Psoas muscle (tissue), 8 donors: ENCODE measurements at regions of chr17 and their contacts with region 1.

Region 1: GRCh38 chr17:49315551-49316257 is 46.3 kb downstream of the ZNF652 start:
- DNase-seq: peak; percentile 63 to 84
- ATAC-seq: peak; percentile 98 to 100 (median 100)
- H3K4me3 ChIP-seq: peak overlapping the region; percentile 37
- H3K27ac ChIP-seq: peak overlapping the region; percentile 1
- H3K4me1 ChIP-seq: peaks cover 9% of the 10 kb centered on the region
- H3K27me3 ChIP-seq: no peaks in the 10 kb centered on the region
- CTCF ChIP-seq: peak; percentile 88

Region 2: DNA sequence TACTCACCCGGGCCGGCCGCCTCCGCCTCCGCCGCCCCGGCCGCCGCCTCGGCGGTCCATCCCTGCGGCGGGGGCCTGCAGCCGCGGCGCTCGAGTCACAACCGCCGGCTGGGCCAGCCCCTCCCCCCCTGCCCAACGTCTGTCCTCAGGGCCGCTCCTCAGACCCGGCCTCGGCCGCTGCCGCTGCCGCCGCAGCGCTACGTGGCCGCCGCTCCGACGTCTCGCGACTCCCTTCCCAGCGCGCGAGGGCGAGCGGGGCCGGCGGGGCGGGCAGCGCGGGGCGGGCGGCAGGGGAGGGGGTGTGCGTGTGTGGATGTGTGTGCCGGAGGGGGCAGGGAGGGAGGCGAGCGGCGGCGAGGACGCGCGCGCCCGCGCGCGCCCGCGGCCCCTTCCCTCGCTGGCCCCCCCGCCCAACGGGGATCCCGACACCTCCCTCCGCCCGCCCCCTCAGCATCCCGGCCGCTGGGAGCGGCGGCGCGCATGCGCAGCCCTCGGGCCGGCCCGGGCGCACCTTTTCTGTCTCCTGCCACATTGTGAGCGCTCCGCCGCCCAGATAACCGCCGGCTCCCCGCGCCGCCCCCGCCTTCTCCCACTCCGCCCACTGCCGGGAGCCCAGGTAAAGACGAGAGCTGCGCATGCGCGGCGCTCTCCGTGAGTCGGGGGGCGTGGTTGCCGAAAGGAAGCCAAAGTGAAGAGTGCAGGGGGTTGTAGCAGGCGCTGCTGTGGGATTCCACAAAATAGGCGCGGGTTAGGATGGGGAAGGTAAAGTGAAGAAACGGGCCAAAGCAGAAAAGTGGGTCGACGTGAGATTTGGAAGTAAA is 46.4 kb after region 1 on chr17 and contains the start of gene ZNF652:
- intact Hi-C with region 1: loop called in 1 of 2 experiments (anchors 5 kb)
- DNase-seq: peak; percentile 93 to 95
- ATAC-seq: peak; percentile 93 to 94 (median 94)
- H3K4me3 ChIP-seq: peak within 1 kb of the TSS; percentile 92
- H3K27ac ChIP-seq: peak within 1 kb of the TSS; percentile 84
- H3K4me1 ChIP-seq: peaks cover 35% of the 10 kb centered on the region
- H3K27me3 ChIP-seq: no peaks in the 10 kb centered on the region
- CTCF ChIP-seq: no peak
- total RNA-seq, gene ZNF652: 21.3 to 30.1 (median 23.8) TPM